BJ (cell line): ENCODE measurements at regions of chr12 and their contacts with region 1.

Region 1: DNA sequence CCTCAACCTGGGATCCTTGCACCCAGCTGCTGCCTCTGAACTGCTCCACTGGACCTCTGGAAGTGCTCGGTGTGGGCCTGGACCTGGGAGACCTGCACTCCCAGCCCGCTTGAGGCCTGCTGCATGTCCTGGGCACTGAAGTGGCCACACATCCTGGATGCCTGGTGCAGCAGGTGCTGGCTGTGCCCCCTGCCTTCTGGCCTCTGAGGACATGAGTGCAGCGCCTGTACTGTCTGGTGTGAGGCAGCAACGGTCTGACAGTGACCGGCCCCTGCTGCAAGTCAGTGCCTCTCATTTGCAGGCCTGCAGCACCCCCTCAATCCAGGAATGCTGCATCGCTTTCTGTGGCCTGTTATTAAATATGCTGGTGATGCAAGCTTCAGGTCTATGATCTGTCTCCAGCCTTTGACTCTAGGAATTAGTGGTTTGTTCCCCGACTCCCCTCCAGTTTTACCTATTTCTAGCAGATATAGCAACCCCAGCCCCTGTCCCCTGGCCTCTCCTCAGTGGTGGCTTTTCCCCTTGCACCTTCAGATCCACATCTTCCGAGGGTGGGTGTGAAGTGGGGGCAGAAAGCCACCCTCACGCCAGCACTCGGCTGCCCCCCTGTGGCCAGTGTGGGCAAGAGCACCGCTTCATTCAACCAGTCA is 3.6 kb downstream of the SMIM41 start:
- DNase-seq: no peak
- H3K4me3 ChIP-seq: no peak overlapping the region
- H3K27me3 ChIP-seq: no peaks in the 10 kb centered on the region
- CTCF ChIP-seq: peak; percentile 99

Region 2: GRCh38 chr12:52004042-52004648 is 79.0 kb before region 1 on chr12:
- CTCF ChIA-PET with region 1: interaction called, 45 read pairs
- POLR2A ChIA-PET with region 1: interaction called, 5 read pairs
- DNase-seq: no peak
- H3K4me3 ChIP-seq: no peak overlapping the region
- H3K27me3 ChIP-seq: peaks cover 6% of the 10 kb centered on the region; the same call in 1 of the 2 replicates
- CTCF ChIP-seq: peak; percentile 85

Region 3: DNA sequence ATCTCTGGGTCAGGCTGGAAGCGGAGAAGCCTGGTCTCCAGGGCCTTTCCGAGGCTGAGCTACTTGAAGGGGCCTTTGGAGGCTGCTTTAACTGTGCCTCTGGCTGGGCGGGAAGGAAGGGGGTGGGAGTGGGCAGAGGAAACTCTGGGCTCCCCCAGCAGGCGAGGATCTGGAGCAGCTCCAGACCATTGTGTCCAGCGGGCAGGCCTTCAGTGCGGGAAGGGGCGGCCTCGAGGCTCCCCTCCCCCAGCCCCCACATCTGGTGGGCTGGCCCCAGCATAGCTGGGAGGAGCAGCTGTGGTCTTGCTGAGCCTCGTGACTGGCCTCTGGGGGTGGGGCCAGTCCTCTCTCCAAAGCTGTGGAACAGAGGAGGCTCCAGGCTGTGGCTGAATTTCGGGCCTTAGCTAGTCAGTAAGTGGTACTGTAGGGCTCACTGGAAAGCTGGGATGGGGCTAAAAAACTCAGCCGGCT is 72.9 kb before region 1 on chr12:
- CTCF ChIA-PET with region 1: interaction called, 45 read pairs
- POLR2A ChIA-PET with region 1: interaction called, 5 read pairs
- DNase-seq: no peak
- H3K4me3 ChIP-seq: no peak overlapping the region
- H3K27me3 ChIP-seq: peaks cover 6% of the 10 kb centered on the region; the same call in 1 of the 2 replicates
- CTCF ChIP-seq: no peak

Region 4: GRCh38 chr12:52069327-52070184 is 13.6 kb before region 1 on chr12 and contains the start of gene ATG101:
- CTCF ChIA-PET with region 1: interaction called, 42 read pairs
- POLR2A ChIA-PET with region 1: interaction called, 3 read pairs
- DNase-seq: peak; percentile 45
- H3K4me3 ChIP-seq: peak within 1 kb of the TSS; percentile 58
- H3K27me3 ChIP-seq: no peaks in the 10 kb centered on the region
- CTCF ChIP-seq: peak; percentile 91
- polyA plus RNA-seq, gene ATG101: 115 and 163 TPM in 2 replicates

Region 5: DNA sequence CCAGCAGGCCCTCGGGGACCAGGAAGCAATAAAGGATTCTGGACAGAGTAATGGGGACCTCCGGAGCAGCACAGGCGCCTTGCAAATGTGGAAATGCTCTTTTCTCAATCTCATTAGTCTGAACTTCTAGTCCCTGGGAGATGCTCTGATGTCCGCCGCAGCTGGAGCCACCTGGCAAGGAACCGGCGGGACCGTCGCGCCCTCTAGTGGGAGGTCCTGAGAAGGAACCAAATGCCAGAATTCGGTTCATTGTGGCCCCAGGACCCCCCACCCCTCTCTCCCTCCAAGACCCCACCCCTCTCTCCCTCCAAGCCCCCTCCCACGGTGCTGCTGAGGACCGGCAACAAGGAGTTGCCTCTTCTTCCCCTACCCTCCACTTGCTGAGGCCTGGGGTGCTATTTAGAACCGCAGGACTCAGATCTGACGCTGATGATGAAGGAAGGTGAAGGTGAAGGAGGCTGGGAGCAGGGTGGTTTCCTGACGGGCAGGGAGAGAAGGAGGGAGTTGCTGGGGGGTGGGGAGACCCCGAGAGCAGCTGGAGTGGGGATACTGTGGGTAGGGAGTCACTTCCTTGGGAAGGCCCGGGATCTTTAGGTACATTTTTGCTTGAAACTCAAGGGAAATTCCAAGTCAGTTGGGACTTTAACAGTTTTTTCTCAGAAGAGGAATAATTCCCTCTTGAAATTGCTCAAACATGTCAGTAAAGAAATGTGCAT is 38.9 kb after region 1 on chr12:
- CTCF ChIA-PET with region 1: interaction called, 15 read pairs
- POLR2A ChIA-PET with region 1: no interaction called
- DNase-seq: no peak
- H3K4me3 ChIP-seq: no peak overlapping the region
- H3K27me3 ChIP-seq: peaks cover 2% of the 10 kb centered on the region
- CTCF ChIP-seq: peak; percentile 83

Region 6: GRCh38 chr12:52139552-52140062 is 56.5 kb after region 1 on chr12:
- CTCF ChIA-PET with region 1: no interaction called
- POLR2A ChIA-PET with region 1: no interaction called
- DNase-seq: no peak
- H3K4me3 ChIP-seq: no peak overlapping the region
- H3K27me3 ChIP-seq: no peaks in the 10 kb centered on the region; the same call in 1 of the 2 replicates
- CTCF ChIP-seq: peak; percentile 80